Sciatic nerve (tissue), 2 donors: ENCODE measurements at regions of chr5 and their contacts with region 1.

Region 1: DNA sequence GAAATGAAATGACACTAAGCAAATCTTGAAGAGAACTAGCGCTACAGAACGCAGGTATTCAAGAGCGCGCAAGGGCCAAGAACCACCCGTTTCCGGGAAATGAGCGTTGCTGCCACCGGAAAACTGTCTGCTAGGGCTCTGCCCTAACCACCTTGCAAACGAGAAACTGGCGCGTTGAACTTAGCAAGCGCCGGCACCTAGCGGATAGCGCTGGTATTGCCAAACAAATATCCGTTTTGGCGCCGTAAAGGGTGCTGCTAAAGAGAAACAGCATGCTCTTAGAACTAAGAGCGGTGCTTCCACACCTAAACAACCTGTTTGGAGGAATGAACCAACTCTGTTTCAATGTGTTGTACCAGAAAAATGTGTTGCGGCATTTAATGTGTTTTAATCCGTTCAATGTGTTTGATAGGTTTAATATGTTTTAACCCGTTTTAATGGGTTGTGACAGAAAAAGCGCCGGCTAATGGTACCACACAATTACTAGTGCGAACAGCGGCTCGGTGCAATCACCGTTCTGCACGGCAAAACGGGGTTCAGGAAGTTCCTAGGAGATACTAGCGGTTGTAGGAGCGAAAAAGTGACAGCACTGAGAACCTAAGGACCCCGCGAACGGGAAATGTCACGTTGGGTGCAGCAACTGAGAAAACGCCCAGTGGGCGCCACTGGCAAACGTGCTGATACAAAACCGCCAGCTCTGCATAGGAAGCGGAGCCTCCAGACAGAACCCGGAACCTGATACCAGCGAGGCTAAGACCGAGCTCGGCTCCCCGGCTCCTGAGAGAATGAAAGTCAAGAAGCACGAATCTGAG is at the start of gene ANXA2R:
- DNase-seq: peak; percentile 92
- ATAC-seq: peak; percentile 79
- total RNA-seq, gene ANXA2R: 5.7 TPM

Region 2: GRCh38 chr5:42994246-42995151 is 46.0 kb before region 1 on chr5:
- intact Hi-C with region 1: loop called (anchors 10 kb)
- DNase-seq: peak; percentile 93
- ATAC-seq: peak; percentile 89

Region 3: DNA sequence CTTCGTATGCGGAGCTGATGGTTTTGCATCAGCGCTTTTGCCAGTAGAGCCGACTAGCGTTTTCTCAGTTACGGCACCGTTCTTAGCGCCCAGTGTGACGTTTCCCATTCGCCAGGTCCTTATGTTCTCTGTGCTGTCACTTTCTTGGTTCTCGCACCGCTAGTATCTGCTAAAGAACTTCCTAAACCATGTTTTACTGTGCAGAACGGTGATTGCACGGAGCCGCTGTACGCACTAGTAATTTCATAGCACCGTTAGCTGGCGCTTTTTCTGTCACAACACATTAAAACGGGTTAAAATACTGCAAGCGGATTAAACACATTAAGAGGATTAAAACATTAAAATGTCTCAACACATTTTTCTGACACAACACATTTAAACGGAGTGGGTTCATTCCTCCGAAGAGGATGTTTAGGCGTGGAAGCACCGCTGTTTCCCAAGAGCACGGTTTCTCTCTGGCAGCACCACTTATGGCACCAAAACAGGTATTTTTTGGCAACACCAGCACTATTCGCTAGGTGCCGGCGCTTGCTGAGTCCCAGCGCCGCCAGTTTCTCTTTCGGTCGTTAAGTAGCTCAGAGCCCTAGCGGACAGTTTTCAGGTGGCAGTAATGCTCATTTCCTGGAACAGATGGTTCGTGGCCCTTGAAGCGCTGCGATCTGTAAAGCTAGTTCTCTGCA is 20.7 kb before region 1 on chr5:
- intact Hi-C with region 1: loop called (anchors 2 kb)
- DNase-seq: no peak
- ATAC-seq: peak; percentile 57